Left ventricle myocardium superior (tissue), 1 donor: ENCODE measurements at regions of chr17 and their contacts with region 1.

Region 1: DNA sequence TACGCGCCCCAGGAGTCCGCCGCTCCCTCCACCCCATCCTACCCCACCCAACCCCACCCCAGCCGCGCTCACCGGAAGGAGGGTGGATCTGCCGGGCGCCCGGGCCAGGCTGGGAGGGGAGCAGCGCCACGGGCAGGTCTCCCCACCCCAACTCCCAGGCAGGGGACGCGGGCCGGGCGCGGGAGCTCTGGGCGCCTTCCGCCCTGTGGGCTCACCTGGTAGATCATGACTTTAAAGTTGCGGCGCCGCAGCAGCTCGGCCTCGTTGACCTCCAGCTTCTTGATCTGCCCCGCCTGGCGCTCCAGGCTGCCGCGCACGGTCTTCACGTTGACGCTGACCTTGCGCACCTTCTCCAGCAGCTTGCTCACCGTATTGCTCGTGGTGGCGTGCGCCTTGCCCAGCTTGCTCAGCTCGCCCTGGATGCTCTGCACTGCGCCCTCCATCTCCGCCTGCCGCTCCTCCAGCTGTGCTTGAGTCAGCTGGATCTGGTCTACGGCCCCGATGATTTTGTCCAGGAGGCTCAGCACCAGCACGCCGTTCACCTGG is 571 bp downstream of the CAVIN1 start:
- DNase-seq: peak; percentile 65
- ATAC-seq: peak; percentile 61

Region 2: DNA sequence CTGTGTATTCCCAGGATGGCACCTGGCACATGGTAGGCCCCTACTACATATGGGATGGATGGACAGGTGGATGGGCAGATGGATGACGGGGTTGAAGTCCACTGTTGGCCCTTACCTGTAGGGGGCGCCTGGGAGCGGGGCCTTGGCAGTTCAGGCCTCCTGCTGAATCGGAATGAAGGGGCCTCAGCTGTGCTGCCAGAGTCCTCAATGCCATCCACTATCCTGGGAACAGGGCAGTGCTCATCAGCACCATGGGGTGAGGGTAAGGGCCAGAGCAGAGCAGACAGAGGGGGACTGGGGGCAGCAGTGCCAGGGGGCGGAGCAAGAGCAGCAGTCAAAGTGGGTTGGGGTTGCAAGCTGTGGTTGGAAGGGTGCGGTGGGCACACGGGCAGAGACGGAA is 259.4 kb before region 1 on chr17:
- intact Hi-C with region 1: no loop called
- DNase-seq: no peak
- ATAC-seq: no peak

Region 3: GRCh38 chr17:42193969-42194899 is 228.3 kb before region 1 on chr17 and contains the start of gene GHDC:
- intact Hi-C with region 1: no loop called
- DNase-seq: peak; percentile 85
- ATAC-seq: peak; percentile 96
- total RNA-seq, gene GHDC: 7.0 TPM

Region 4: GRCh38 chr17:42322382-42323267 is 99.9 kb before region 1 on chr17:
- intact Hi-C with region 1: no loop called
- DNase-seq: peak; percentile 95
- ATAC-seq: peak; percentile 86

Region 5: DNA sequence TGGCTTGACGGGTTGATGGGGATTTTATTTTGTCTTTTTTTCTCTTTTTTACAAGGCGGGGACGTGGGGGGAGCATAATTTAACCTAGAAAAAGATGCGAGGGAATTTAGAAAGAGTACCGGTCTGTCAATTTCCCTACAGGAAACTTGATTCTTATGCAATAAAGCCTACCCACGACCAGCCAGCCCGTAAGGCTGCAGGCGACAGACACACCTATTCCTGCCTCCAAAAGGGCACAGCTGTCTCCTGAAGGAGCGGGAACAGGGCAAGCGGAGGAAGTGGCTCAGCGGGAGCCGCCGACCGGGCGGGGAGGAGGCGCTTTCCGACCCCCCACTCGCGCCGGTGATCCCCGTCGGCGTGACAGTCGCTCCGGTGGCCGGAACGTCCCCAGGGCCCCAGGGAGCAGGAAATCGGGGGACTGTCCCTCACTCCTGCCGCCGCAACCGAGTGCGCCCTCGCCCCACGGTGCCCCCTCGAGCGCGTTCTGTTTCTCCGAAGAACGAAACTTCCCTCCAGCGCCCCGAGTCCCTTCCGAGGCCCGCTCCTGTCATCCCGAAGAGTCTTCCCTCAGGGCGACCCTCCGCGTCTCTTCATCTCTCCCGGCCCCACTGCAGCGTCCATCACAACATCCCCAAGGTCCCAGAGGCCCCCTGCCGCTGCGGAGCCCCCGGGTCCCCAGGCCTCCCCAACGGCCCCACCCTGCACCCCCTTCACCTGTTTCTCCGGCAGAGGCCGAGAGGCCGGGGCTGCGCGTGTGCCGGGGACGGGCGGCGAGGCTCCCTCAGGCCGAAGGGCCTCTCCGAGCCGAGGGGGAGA is 34.7 kb before region 1 on chr17:
- intact Hi-C with region 1: loop called (anchors 2 kb)
- DNase-seq: peak; percentile 62
- ATAC-seq: peak; percentile 41